GM12878 (cell line): ENCODE measurements at regions of chr11 and their contacts with region 1.

Region 1: DNA sequence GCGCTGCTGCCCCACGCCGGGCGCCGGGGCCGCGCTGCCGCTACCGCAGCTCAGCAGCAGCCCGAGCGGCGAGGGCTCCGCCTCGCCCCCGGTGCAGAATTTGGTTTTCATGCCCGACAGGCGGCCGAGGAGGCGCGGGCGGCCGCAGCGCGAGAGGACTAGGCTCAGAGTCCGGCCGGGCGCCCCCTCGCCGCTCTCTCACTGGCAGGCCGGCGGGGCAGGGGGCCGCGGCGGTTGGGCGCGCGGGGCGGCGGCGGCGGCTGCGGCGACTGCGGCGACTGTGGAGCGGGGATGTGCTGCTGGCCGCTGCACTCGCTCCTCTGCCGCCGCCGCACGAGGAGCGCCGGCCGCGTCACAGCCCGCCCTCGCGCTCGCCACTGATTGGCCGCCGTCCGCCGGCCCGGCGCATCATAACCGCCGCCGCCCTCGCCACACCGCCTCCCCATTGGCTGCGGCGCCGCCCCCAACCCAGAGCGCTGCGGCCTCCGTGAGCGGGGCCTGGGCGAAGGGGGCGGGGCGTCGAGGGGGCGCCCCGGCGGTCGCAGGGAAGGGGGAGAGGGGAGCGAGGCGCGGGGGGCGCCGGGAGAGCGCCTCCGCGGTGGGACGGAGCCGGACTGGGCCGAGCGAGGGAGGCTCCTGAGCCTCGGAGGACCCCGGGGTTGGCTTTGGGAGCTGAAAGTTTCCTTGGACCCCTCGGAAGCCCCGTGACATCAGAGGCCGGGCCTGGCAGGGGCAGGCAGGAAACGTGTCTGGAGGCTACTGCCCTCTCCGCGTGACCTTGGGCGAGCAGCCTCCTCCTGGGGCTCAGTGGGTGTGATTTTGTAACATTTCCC is at the start of gene CHKA:
- DNase-seq: peak; percentile 47
- ATAC-seq: peak; percentile 89
- H3K4me3 ChIP-seq: peak within 1 kb of the TSS; percentile 92
- H3K27ac ChIP-seq: peak within 1 kb of the TSS; percentile 89
- H3K4me1 ChIP-seq: peaks cover 12% of the 10 kb centered on the region
- H3K27me3 ChIP-seq: no peaks in the 10 kb centered on the region
- CTCF ChIP-seq: no peak
- EP300 ChIP-seq: no peak
- POLR2A ChIP-seq: peak; percentile 76
- RAD21 ChIP-seq: no peak
- polyA plus RNA-seq, gene CHKA: 5.2 to 5.3 TPM

Region 2: GRCh38 chr11:68030318-68031138 is 90.8 kb before region 1 on chr11 and contains the start of gene NDUFS8:
- CTCF ChIA-PET with region 1: no interaction called
- POLR2A ChIA-PET with region 1: no interaction called
- RAD21 ChIA-PET with region 1: interaction called, 6 read pairs
- SMC1A ChIA-PET with region 1: no interaction called
- in situ Hi-C with region 1: no loop called
- intact Hi-C with region 1: loop called (anchors 5 kb)
- DNase-seq: peak; percentile 97
- ATAC-seq: peak; percentile 98
- H3K4me3 ChIP-seq: peak within 1 kb of the TSS; percentile 89
- H3K27ac ChIP-seq: peak within 1 kb of the TSS; percentile 81
- H3K4me1 ChIP-seq: peaks cover 17% of the 10 kb centered on the region
- H3K27me3 ChIP-seq: no peaks in the 10 kb centered on the region
- CTCF ChIP-seq: no peak
- EP300 ChIP-seq: 0 out of 4 replicates have a peak, but pooled peaks of 1 of the 2 experiments have one; percentile 13
- POLR2A ChIP-seq: peak; percentile 92
- RAD21 ChIP-seq: no peak
- polyA plus RNA-seq, gene NDUFS8: 17.6 to 71.2 TPM

Region 3: GRCh38 chr11:68076371-68077042 is 44.8 kb before region 1 on chr11:
- CTCF ChIA-PET with region 1: interaction called, 4 read pairs
- POLR2A ChIA-PET with region 1: interaction called, 4 read pairs
- RAD21 ChIA-PET with region 1: interaction called, 6 read pairs
- SMC1A ChIA-PET with region 1: interaction called, 7 read pairs
- in situ Hi-C with region 1: no loop called
- intact Hi-C with region 1: loop called (anchors 2 kb)
- DNase-seq: no peak
- ATAC-seq: 0 out of 3 replicates have a peak, but pooled peaks have one; percentile 21
- H3K4me3 ChIP-seq: no peak overlapping the region
- H3K27ac ChIP-seq: no peak overlapping the region
- H3K4me1 ChIP-seq: peaks cover 3% of the 10 kb centered on the region; the same call in 1 of the 2 replicates
- H3K27me3 ChIP-seq: no peaks in the 10 kb centered on the region
- CTCF ChIP-seq: peak; percentile 18 to 31 (median 27); a peak in 4 of 6 replicates
- EP300 ChIP-seq: no peak
- POLR2A ChIP-seq: no peak
- RAD21 ChIP-seq: peak; percentile 39; the same call in 1 of the 2 replicates

Region 4: GRCh38 chr11:68099474-68100405 is 21.5 kb before region 1 on chr11:
- CTCF ChIA-PET with region 1: interaction called, 14 read pairs
- POLR2A ChIA-PET with region 1: interaction called, 34 read pairs
- RAD21 ChIA-PET with region 1: interaction called, 28 read pairs
- SMC1A ChIA-PET with region 1: interaction called, 40 read pairs
- in situ Hi-C with region 1: no loop called
- intact Hi-C with region 1: no loop called
- DNase-seq: peak; percentile 52
- ATAC-seq: peak; percentile 96
- H3K4me3 ChIP-seq: peak overlapping the region; percentile 14
- H3K27ac ChIP-seq: peak overlapping the region; percentile 83
- H3K4me1 ChIP-seq: peaks cover 8% of the 10 kb centered on the region
- H3K27me3 ChIP-seq: no peaks in the 10 kb centered on the region
- CTCF ChIP-seq: no peak
- EP300 ChIP-seq: no peak
- POLR2A ChIP-seq: no peak
- RAD21 ChIP-seq: no peak

Region 5: GRCh38 chr11:68146704-68147474 is 25.6 kb after region 1 on chr11:
- CTCF ChIA-PET with region 1: no interaction called
- POLR2A ChIA-PET with region 1: no interaction called
- RAD21 ChIA-PET with region 1: no interaction called
- SMC1A ChIA-PET with region 1: no interaction called
- in situ Hi-C with region 1: no loop called
- intact Hi-C with region 1: no loop called
- DNase-seq: no peak
- ATAC-seq: no peak; the same call in 1 of the 3 replicates
- H3K4me3 ChIP-seq: no peak overlapping the region
- H3K27ac ChIP-seq: no peak overlapping the region
- H3K4me1 ChIP-seq: peaks cover 6% of the 10 kb centered on the region
- H3K27me3 ChIP-seq: no peaks in the 10 kb centered on the region
- CTCF ChIP-seq: no peak
- EP300 ChIP-seq: no peak
- POLR2A ChIP-seq: no peak
- RAD21 ChIP-seq: no peak